WTC11 (cell line): ENCODE measurements at regions of chr9 and their contacts with region 1.

Region 1: DNA sequence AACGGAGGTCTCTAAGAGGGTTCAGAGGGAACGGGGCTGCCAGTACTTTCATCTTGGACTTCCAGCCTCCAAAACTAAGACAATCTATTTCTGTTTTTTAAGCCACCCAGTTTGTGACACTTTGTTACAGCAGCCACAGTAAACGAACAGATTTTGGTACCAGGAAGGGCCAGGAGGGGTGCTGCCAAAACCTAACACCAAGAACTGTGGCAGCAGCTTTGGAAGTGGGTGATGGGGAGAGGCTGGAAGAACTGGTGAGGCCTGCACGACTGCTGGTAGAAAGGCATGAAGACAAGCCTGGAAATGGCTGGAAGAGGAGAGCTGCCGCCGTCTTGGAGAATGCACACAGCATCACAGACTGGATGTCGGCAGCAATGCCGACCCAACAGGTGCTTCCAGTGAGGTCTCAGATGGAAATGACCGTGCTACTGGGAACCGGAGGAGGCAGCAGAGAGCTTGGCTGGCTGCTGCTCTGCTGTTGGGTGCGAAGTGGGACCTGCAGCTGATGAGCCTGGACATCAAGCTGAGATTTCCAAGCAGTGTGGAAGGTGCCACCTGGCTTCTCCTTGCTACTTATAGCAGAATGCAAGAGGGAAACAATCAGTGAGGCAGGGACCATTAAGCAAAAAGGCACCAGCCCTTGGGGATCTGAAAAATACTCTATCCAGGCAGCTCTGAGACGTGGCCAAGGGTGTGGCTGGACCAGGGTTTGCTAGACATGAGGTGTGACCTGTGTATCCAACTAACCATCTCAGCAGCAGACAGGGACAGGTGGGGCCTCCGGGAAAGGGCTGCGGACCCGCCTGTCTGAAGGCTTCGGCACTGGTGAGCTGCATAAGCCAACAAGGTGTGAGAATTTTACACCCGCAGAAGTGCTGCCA is 4.7 kb upstream of the TMEM210 start:
- DNase-seq: peak; percentile 48
- ATAC-seq: peak; percentile 60
- H3K4me3 Mint-ChIP-seq: no peak overlapping the region
- H3K27ac Mint-ChIP-seq: peak overlapping the region; percentile 49
- H3K4me1 Mint-ChIP-seq: no peaks in the 10 kb centered on the region
- H3K27me3 Mint-ChIP-seq: peaks cover 5% of the 10 kb centered on the region
- CTCF ChIP-seq: peak; percentile 21; the same call in 1 of the 2 replicates

Region 2: DNA sequence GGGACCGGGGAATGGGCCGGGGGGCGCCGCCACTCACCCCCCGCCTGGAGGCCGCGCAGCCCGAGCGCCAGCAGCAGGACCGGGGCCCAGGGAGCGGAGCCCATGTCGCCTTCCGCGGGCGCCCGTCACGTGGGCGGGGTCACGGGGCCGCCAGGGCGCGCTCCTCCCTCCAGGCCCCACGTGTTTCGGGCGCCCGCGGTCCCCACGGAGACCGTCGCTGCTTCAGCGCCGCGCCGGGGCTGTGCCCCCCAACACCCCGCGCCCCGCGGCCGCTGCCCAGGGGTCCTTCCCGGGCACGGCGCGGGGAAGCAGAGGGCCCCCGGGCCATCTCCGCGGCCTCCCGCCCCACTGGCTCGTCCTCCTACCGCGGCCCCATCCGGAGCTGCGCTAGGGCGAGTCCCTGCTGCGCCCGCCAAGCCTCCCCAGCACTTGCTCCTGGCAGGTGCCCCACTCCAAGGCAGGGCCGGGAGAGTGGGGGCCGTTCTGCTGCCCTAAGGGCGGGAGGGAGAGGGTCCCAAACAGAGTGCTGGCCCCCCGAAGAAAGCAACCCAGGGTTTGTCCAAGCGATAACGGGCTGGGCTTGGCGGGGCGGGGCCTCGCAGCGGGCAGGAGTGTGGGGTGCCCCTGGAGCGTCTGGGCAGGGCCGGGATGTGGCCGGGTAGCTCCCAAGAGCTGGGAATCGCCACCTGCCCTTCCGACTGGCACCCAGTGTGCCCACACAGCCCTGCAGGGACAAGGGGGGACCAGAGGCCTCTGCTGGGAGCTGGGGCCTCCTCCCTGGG is 61.7 kb before region 1 on chr9 and contains the start of gene DPP7:
- CTCF ChIA-PET with region 1: interaction called, 12 read pairs
- POLR2A ChIA-PET with region 1: interaction called, 3 read pairs
- DNase-seq: no peak
- ATAC-seq: peak; percentile 21
- H3K4me3 Mint-ChIP-seq: peak within 1 kb of the TSS; percentile 52
- H3K27ac Mint-ChIP-seq: no peak within 1 kb of the TSS
- H3K4me1 Mint-ChIP-seq: no peaks in the 10 kb centered on the region
- H3K27me3 Mint-ChIP-seq: peaks cover 29% of the 10 kb centered on the region
- CTCF ChIP-seq: no peak
- total RNA-seq, gene DPP7: 38.9 to 43.7 TPM (median 42.1 TPM) in 3 replicates

Region 3: GRCh38 chr9:137129456-137130175 is 46.9 kb before region 1 on chr9:
- CTCF ChIA-PET with region 1: interaction called, 31 read pairs
- POLR2A ChIA-PET with region 1: interaction called, 3 read pairs
- DNase-seq: peak; percentile 87
- ATAC-seq: peak; percentile 96
- H3K4me3 Mint-ChIP-seq: peak overlapping the region; percentile 78
- H3K27ac Mint-ChIP-seq: no peak overlapping the region
- H3K4me1 Mint-ChIP-seq: peaks cover 14% of the 10 kb centered on the region
- H3K27me3 Mint-ChIP-seq: peaks cover 23% of the 10 kb centered on the region
- CTCF ChIP-seq: no peak

Region 4: GRCh38 chr9:137162505-137163100 is 13.9 kb before region 1 on chr9:
- CTCF ChIA-PET with region 1: interaction called, 40 read pairs
- POLR2A ChIA-PET with region 1: interaction called, 6 read pairs
- DNase-seq: peak; percentile 54
- ATAC-seq: peak; percentile 12
- H3K4me3 Mint-ChIP-seq: peak overlapping the region; percentile 60
- H3K27ac Mint-ChIP-seq: no peak overlapping the region
- H3K4me1 Mint-ChIP-seq: no peaks in the 10 kb centered on the region
- H3K27me3 Mint-ChIP-seq: peaks cover 85% of the 10 kb centered on the region
- CTCF ChIP-seq: no peak

Region 5: DNA sequence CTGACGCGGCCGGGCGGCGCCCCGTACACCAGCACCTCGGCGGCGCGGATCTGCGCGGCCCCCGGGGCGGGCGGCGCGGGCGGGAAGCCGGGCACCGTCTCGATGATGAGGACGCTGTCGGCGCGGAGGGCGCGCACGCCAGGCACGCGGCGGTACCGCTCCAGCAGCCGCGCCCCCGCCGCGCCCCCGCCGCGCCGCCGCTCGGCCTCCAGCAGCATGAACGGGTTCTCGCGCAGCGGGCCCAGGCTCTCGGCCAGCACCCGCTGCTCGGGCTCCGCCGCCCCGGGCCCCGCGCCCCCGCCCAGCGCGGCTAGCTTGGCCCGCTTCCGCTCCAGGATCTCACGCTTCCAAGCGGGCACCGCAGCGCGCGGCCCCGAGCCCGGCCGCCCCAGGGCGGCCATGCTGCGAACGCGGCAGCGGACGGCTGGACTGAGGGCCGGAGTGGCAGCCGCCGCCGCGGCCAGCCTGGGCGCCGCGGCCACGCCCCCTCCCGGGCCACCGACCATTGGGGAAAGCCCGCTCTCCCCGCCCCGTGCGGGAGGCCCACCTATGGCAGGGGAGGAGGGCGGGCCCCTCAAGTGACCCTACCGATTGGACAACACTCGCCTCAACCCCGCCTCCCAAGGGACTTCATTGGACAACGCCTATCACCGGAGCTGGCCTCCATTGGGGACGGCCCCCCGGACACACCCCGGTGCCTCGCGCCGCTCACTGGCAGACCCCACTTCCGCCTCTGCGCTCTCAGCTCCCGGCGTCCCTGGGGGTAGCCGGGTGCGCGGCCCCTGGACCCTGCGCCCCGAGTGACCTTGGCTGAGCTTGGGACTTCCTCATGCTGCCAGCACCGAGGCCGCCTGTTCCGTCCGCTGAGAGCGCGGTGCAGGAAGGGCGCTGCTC is 24.0 kb after region 1 on chr9 and contains the start of gene TPRN:
- CTCF ChIA-PET with region 1: interaction called, 16 read pairs
- POLR2A ChIA-PET with region 1: no interaction called
- DNase-seq: peak; percentile 100
- ATAC-seq: peak; percentile 97
- H3K4me3 Mint-ChIP-seq: peak within 1 kb of the TSS; percentile 84
- H3K27ac Mint-ChIP-seq: peak within 1 kb of the TSS; percentile 91
- H3K4me1 Mint-ChIP-seq: peaks cover 33% of the 10 kb centered on the region
- H3K27me3 Mint-ChIP-seq: no peaks in the 10 kb centered on the region
- CTCF ChIP-seq: no peak
- total RNA-seq, gene TPRN: 33.4 to 43.1 TPM (median 38.1 TPM) in 3 replicates

Region 6: DNA sequence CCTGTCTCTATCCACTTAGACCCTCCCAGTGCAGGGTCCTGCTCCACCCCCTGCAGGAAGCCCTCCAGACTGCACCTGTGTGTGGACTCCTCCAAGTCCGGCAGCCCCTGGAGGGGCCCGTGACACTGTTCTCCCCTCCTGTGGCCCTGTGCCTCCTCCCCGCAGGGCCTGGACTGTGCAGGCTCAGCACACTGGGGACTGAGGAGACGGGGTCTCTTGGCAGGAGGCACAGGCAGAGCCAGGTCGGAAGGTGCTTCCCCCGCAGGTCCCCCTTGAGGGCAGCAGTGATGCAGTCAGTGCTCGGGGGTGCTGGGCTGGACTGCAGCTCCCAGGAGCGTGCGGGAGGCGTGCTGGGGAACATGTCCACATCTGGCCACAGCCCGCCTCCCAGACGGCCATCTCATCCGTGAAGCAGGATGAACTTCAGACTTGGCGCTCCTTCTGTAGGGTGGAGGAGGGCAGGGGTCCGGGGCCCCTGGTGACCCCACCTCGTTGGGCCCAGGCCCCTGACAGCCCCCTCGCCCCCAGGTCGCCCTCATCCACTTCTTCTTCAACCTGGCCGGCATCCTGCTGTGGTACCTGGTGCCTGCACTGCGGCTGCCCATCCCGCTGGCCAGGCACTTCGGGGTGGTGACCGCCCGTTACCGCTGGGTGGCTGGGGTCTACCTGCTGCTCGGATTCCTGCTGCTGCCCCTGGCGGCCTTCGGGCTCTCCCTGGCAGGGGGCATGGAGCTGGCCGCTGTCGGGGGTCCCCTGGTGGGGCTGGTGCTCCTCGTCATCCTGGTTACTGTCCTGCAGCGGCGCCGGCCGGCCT is 59.1 kb after region 1 on chr9:
- CTCF ChIA-PET with region 1: interaction called, 33 read pairs
- POLR2A ChIA-PET with region 1: no interaction called
- DNase-seq: peak; percentile 55
- ATAC-seq: peak; percentile 27
- H3K4me3 Mint-ChIP-seq: no peak overlapping the region
- H3K27ac Mint-ChIP-seq: no peak overlapping the region; the same call in 1 of the 2 replicates
- H3K4me1 Mint-ChIP-seq: peaks cover 18% of the 10 kb centered on the region
- H3K27me3 Mint-ChIP-seq: no peaks in the 10 kb centered on the region
- CTCF ChIP-seq: no peak